Activated CD8-positive, alpha-beta T cell treated with anti-CD3 and anti-CD28 coated beads, Interleukin-2, amount 10 ng/mL, durations not matched to agents 7 days and 5 days (primary cell): ENCODE measurements at regions of chr2 and their contacts with region 1.

Region 1: DNA sequence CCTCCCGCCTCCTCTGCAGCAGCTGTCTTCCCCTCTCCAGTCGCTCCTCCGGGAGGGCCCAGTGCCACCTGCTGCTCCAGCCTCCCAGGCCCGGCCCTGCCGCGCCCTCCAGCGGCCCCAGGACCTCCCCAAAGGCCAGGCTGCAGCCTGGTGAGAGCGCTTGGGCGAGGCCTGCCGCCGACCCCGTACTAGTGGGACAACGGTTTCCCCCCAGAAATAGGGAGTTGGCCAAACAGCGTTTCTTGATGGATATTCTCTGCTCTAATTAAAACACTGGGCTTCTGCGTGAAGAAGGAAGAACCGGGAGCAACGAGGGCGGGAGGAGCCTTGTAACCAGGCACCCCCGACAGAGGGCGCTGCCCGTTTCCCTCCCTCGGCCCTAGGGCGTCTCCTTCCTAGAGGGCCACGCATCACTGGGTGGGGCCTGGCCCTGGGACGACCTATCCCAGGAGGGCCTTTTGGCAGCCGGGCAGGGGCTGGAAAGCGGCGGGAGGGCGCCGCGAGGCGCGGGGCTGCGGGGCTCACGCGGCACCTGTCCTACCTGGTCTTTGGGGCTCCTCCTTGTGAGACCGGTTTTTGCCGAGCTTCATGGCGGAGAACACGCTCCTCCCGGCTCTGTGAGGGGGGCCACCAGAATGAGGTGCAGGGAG is 25.4 kb upstream of the OTOF start:
- DNase-seq: peak; percentile 90
- ATAC-seq: peak; percentile 100
- H3K4me3 Mint-ChIP-seq: peak overlapping the region; percentile 67
- H3K27ac Mint-ChIP-seq: peak overlapping the region; percentile 72
- H3K4me1 Mint-ChIP-seq: peaks cover 9% of the 10 kb centered on the region
- H3K27me3 Mint-ChIP-seq: peaks cover 9% of the 10 kb centered on the region

Region 2: DNA sequence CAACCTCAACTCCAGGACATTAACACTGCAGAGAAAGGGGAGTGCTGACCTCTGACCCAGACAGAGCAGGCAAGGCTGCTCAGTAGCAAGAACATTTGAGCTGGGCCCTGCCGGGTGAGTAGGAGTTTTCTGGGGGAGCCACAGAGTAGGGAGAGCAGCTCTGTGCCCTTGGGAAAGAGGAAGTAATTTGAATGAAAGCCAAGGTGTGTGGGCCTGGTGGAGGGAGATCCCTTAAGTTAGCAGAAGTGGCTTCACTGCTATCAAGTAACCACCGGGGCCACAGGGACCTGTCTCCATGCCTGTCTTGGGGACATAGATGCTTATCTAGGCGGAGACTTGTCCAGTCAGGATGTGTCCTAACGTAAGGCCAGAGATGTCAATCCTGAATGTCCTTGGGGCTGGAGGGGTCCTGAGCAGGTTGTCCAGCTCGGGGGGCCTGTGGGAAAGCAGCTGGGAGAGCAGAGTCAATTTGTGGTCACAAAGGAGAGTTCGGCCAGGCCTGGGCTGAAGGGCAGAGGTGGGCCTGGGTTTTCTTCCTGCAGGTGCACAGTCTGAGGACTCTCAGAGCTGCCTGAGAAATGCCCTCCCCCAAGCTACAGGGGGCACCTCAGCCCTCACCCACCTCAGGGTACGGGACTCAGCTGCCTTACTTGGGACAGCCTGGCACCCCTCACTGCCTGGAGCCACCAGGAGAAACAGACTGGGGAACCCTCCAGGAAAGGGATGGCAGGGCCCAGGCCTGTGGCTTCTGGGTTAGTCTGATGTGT is 10.4 kb before region 1 on chr2:
- CTCF ChIA-PET with region 1: interaction called, 10 read pairs
- POLR2A ChIA-PET with region 1: no interaction called
- DNase-seq: no peak
- ATAC-seq: peak; percentile 22
- H3K4me3 Mint-ChIP-seq: no peak overlapping the region
- H3K27ac Mint-ChIP-seq: no peak overlapping the region
- H3K4me1 Mint-ChIP-seq: peaks cover 19% of the 10 kb centered on the region
- H3K27me3 Mint-ChIP-seq: peaks cover 4% of the 10 kb centered on the region

Region 3: DNA sequence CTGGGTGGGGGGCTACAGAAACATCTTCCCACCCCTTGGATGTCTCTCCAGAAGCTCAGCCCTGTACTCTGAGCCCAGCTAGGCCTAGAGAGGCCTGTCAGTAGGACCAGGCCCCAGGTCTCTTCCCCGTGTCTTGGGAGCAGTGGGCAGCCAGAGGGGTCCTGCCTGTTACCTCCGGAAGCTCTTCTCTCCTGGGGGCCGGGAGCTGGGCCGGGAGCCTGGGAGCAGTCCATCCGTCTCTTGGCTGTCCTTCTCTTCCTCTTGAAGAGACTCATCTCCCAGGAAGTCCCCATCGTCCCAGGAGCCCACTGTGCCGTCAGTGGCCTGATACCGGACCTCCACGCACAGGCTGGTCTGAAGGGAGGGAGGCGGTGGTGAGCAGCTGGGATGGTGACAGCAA is 12.9 kb after region 1 on chr2:
- CTCF ChIA-PET with region 1: interaction called, 12 read pairs
- POLR2A ChIA-PET with region 1: interaction called, 3 read pairs
- DNase-seq: no peak
- ATAC-seq: no peak
- H3K4me3 Mint-ChIP-seq: no peak overlapping the region
- H3K27ac Mint-ChIP-seq: no peak overlapping the region
- H3K4me1 Mint-ChIP-seq: peaks cover 16% of the 10 kb centered on the region
- H3K27me3 Mint-ChIP-seq: peaks cover 9% of the 10 kb centered on the region